Lower leg skin (tissue), 4 donors: ENCODE measurements at regions of chr18 and their contacts with region 1.

Region 1: GRCh38 chr18:79006106-79006795 is 26.6 kb downstream of the SALL3 start:
- DNase-seq: no peak
- H3K4me3 ChIP-seq: no peak overlapping the region
- CTCF ChIP-seq: no peak
- POLR2A ChIP-seq: no peak

Region 2: GRCh38 chr18:78929516-78929915 is 76.7 kb before region 1 on chr18:
- intact Hi-C with region 1: loop called (anchors 2 kb)
- DNase-seq: peak in 1 of 2 donors; percentile 29
- H3K4me3 ChIP-seq: no peak overlapping the region
- CTCF ChIP-seq: no peak
- POLR2A ChIP-seq: no peak